ENCODE measurements at regions of chr15 and their contacts with region 1.

Region 1: GRCh38 chr15:65304389-65305144 is at the start of gene RNU5B-1:
- DNase-seq: peak; percentile 92
- H3K4me3 ChIP-seq: peak within 1 kb of the TSS; percentile 49 to 82 (median 53)
- H3K27ac ChIP-seq: peak within 1 kb of the TSS; percentile 100
- H3K4me1 ChIP-seq: peaks cover 9% of the 10 kb centered on the region
- H3K27me3 ChIP-seq: peaks cover 0 to 2% of the 10 kb centered on the region in 2 experiments
- CTCF ChIP-seq: peak; percentile 76 to 87
- POLR2A ChIP-seq: peak; percentile 100
- total RNA-seq, gene RNU5B-1: not detected in 2 replicates

Region 2: GRCh38 chr15:65286704-65287519 is 17.7 kb before region 1 on chr15 and contains the start of gene PARP16:
- CTCF ChIA-PET with region 1: interaction called, 14 read pairs
- POLR2A ChIA-PET with region 1: interaction called, 19 read pairs
- dilution Hi-C with region 1: no loop called
- intact Hi-C with region 1: no loop called
- DNase-seq: peak; percentile 85
- H3K4me3 ChIP-seq: peak within 1 kb of the TSS; percentile 65 to 75 (median 67)
- H3K27ac ChIP-seq: peak within 1 kb of the TSS; percentile 40
- H3K4me1 ChIP-seq: peaks cover 16% of the 10 kb centered on the region
- H3K27me3 ChIP-seq: peaks cover 2% of the 10 kb centered on the region in 2 experiments
- CTCF ChIP-seq: peak in 1 of 2 donors; percentile 11
- POLR2A ChIP-seq: peak; percentile 71
- total RNA-seq, gene PARP16: 6.0 and 6.3 TPM in 2 replicates

Region 3: DNA sequence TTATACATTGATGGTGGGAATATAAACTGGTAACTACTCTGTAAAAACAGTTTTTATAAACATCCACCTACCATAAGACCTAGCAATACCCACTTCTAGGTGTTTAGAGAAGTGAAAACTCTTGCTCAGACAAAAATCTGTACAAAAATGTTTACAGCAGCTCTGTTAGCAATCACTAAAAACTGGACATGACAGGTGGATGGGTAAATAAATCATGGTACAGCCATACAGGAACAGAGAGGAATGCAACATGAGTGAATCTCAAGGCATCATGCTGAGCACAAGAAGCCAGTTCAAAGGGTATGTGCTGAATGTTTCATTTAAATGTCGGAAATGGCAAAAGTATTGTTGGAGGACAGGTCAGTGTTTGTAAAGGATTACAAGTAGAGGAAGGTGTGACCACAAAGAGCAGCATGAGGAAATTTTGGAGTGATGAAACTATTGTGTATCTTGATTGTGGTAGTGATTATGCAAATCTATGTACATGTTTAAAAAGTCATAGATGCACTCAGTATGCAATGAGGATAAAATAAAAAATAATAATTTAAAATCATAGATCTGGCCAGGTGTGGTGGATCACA is 11.5 kb before region 1 on chr15:
- CTCF ChIA-PET with region 1: interaction called, 14 read pairs
- POLR2A ChIA-PET with region 1: interaction called, 10 read pairs
- dilution Hi-C with region 1: no loop called
- intact Hi-C with region 1: loop called (anchors 1 kb)
- DNase-seq: no peak
- H3K4me3 ChIP-seq: no peak overlapping the region
- H3K27ac ChIP-seq: no peak overlapping the region
- H3K4me1 ChIP-seq: peaks cover 3% of the 10 kb centered on the region
- H3K27me3 ChIP-seq: peaks cover 2 to 5% of the 10 kb centered on the region in 2 experiments
- CTCF ChIP-seq: no peak
- POLR2A ChIP-seq: no peak

Region 4: DNA sequence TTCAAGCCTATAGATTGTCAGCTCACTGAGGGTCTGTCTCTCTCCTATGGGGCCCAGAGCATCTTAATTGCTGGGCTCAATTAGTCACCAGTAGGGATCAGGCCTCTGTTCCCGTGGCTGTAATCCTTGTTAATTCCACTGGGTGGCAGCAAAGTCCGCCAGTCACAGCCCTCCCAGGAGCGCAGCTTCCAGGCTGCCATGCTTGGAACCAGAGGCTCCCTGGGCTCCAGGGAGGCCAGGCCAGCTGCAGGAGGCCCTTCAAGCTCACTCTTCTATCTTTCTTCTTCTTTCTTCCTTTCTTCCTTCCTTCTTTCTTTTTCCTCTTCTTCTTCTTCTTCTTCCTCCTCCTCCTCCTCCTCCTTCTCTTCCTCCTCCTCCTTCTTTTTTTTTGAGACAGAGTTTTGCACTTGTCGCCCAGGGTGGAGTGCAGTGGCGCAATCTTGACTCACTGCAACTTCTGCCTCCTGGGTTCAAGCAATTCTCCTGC is 14.3 kb after region 1 on chr15:
- CTCF ChIA-PET with region 1: interaction called, 6 read pairs
- POLR2A ChIA-PET with region 1: interaction called, 39 read pairs
- dilution Hi-C with region 1: no loop called
- intact Hi-C with region 1: no loop called
- DNase-seq: peak; percentile 79
- H3K4me3 ChIP-seq: no peak overlapping the region
- H3K27ac ChIP-seq: no peak overlapping the region
- H3K4me1 ChIP-seq: no peaks in the 10 kb centered on the region
- H3K27me3 ChIP-seq: peaks cover 0 to 10% of the 10 kb centered on the region in 2 experiments
- CTCF ChIP-seq: peak; percentile 75 to 87
- POLR2A ChIP-seq: no peak

Region 5: DNA sequence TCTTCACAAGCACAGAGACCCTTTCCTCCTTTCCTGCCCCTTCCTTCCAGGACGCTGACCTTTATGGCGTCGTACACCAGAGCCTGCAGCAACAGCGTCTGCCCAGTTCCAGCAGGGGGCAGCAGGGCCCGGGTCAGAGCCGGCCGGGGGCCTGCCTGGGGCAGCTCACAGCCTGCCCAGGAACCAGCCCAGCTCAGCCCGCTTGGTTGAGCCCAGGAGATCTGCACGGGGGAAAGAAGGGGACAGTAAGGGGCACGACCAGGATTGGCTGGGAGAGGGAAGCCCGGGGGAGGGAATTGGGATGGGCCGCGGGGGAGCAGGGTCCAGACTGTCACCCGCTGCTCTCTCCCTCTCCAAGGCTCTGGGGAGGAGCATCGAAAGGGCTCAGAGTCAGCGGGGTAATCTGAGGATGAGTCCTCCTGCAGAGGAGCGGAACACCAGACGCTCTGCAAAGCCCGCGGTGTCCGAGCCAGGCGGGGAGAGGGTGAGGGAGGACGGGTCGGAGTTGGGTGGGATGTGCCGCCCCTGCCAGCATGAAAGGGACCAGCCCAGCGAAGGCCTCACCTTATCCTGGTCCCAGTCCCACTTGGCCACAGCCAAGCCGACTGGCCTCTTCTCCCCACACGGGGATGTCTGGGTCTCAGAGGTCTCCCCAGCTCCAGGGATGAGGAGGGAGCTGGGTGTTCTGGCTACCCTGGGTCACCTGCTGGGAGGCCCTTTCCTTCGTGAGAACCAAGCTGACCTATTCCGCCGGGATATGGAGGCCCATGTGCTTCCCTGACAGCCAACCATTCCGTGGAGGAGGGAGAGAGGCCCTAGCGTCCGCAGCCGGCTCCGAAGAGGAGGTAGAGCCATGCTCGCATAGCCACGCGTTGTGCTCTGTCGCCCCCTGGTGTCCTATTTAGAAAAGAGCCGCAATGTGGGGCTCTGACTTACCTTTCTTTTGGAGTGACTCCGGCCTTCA is 80.6 kb after region 1 on chr15:
- CTCF ChIA-PET with region 1: interaction called, 10 read pairs
- POLR2A ChIA-PET with region 1: interaction called, 12 read pairs
- dilution Hi-C with region 1: no loop called
- intact Hi-C with region 1: no loop called
- DNase-seq: peak; percentile 82
- H3K4me3 ChIP-seq: no peak overlapping the region
- H3K27ac ChIP-seq: no peak overlapping the region
- H3K4me1 ChIP-seq: peaks cover 6% of the 10 kb centered on the region
- H3K27me3 ChIP-seq: peaks cover 8 to 13% of the 10 kb centered on the region in 2 experiments
- CTCF ChIP-seq: peak; percentile 96
- POLR2A ChIP-seq: no peak